Right ventricle myocardium inferior (tissue), 1 donor: ENCODE measurements at regions of chr16 and their contacts with region 1.

Region 1: DNA sequence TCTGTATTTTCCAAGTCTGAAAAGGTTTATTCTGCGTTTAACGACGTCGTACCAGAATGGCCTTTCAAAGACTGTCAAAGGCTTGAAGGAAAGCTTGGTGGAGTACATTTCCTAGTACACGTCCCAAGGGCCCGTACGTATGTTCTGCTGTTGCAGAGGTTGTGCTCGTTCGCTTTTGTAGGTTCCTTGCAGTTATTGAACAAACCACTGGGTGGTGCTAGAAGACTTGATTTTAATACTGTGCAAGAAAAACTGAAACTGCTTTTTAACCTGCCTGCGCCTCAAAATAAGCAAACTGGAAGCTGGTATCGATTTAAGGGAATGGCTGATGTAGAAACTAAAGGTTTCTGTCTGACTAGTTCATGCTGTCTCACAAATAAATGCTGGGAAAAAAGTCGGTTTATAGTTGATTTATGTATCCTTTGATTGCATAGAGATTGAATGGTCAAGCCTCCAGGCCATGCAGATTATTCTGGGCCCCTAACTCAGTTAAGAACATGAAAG is 54.6 kb downstream of the USP10 start:
- DNase-seq: no peak
- ATAC-seq: peak; percentile 71

Region 2: GRCh38 chr16:84952335-84953189 is 198.2 kb after region 1 on chr16:
- intact Hi-C with region 1: loop called (anchors 1 kb)
- DNase-seq: peak; percentile 76
- ATAC-seq: peak; percentile 94

Region 3: DNA sequence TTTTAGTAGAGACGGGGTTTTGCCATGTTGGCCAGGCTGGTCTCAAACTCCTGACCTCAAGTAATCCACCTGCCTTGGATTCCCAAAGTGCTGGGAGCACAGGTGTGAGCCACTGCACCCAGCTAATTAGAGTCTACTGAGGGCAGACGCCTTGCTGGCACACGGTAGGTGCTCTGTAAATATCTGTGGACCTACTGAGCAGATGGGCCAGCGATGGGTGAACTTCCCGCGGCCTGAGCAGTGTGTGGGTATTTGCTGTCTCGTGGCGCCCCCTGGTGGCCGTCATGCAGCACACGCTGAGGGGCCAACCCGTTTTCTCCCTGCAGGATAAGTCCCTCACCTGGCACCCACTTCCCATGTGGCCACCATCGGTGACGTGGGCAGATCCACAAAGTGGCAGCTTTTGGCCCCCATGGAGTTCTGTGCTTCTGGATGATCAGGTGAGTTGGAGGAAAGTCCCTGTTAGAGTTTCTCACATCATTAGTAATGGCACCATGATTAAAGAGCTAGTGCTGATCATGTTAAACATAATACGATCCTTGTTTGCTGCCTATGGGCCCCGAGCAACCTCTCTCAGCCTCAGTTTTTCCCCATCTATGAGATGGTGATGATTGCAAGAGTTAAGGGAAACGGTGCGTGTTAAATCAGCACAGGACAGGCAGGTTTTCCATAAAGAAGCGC is 216.2 kb after region 1 on chr16:
- intact Hi-C with region 1: loop called (anchors 1 kb)
- DNase-seq: peak; percentile 94
- ATAC-seq: peak; percentile 78

Region 4: GRCh38 chr16:85072947-85073346 is 318.5 kb after region 1 on chr16:
- intact Hi-C with region 1: no loop called
- DNase-seq: peak; percentile 79
- ATAC-seq: peak; percentile 94

Region 5: GRCh38 chr16:86575754-86576557 is 1821.6 kb after region 1 on chr16:
- intact Hi-C with region 1: no loop called
- DNase-seq: peak; percentile 89
- ATAC-seq: peak; percentile 92